HEK293 (cell line): ENCODE measurements at regions of chr5 and their contacts with region 1.

Region 1: GRCh38 chr5:43631182-43631910 is 28.4 kb downstream of the NNT start:
- H3K4me3 ChIP-seq: no peak overlapping the region
- H3K27ac ChIP-seq: no peak overlapping the region
- H3K4me1 ChIP-seq: no peaks in the 10 kb centered on the region
- CTCF ChIP-seq: peak; percentile 63

Region 2: GRCh38 chr5:43616535-43616934 is 14.8 kb before region 1 on chr5:
- CTCF ChIA-PET with region 1: interaction called, 66 read pairs
- POLR2A ChIA-PET with region 1: no interaction called
- H3K4me3 ChIP-seq: no peak overlapping the region
- H3K27ac ChIP-seq: no peak overlapping the region
- H3K4me1 ChIP-seq: no peaks in the 10 kb centered on the region
- CTCF ChIP-seq: no peak

Region 3: GRCh38 chr5:43652537-43653302 is 21.4 kb after region 1 on chr5:
- CTCF ChIA-PET with region 1: interaction called, 23 read pairs
- POLR2A ChIA-PET with region 1: no interaction called
- H3K4me3 ChIP-seq: no peak overlapping the region
- H3K27ac ChIP-seq: no peak overlapping the region
- H3K4me1 ChIP-seq: no peaks in the 10 kb centered on the region
- CTCF ChIP-seq: no peak

Region 4: DNA sequence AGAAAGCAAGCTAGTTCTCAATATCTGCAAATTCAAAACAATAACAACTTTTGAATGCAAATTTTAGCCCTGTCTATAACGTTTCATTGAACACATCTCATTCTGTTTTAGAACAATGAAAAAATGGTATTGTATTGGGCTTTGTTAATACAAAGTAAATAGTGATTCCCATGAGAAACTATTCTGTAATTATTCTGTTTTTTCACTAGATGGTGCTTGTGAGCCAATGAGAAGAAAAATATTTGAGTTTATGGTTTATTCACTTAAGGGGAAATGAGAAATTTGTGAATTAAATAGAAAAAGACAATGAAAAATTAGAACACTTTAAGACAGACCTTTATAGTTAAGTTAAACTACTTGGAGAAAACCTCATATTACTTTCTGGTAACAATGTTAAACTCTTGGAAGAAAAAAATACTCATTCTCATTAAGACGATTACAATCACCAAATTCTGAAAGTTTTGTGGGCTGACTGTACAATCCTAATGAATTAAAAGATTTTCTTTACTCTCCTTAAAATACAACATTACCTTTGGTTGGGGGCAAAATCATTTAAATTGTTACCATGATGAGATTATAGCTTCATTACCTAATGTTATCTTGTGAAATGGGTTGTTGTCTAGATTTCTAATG is 98.6 kb after region 1 on chr5:
- CTCF ChIA-PET with region 1: interaction called, 18 read pairs
- POLR2A ChIA-PET with region 1: no interaction called
- H3K4me3 ChIP-seq: no peak overlapping the region
- H3K27ac ChIP-seq: no peak overlapping the region
- H3K4me1 ChIP-seq: no peaks in the 10 kb centered on the region
- CTCF ChIP-seq: peak; percentile 33; the same call in 1 of the 2 replicates